ENCODE measurements at regions of chr9 and their contacts with region 1.

Region 1: DNA sequence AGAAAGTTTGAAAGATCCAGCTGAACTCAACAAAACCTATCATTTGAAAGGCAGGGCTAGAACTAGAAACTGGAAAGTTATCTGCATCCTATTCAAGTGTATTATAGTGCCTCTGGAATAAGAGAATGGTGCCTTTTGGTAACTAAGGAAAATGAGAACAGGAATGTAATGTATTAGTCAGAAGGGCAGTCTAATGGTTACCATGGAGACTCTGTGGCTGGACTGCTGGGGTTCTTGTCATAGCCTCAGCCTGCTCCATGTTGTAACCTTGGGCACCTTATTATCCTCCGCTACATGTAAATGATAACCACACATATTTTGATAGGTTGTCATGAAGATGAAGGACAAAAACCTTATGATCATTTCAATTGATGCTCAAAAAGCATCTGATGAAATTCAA is 24.6 kb upstream of the IFNB1 start:
- DNase-seq: no peak
- H3K4me3 ChIP-seq: no peak overlapping the region
- H3K27ac ChIP-seq: no peak overlapping the region
- H3K4me1 ChIP-seq: no peaks in the 10 kb centered on the region
- H3K27me3 ChIP-seq: no peaks in the 10 kb centered on the region
- CTCF ChIP-seq: no peak
- EP300 ChIP-seq: no peak
- POLR2A ChIP-seq: no peak

Region 2: DNA sequence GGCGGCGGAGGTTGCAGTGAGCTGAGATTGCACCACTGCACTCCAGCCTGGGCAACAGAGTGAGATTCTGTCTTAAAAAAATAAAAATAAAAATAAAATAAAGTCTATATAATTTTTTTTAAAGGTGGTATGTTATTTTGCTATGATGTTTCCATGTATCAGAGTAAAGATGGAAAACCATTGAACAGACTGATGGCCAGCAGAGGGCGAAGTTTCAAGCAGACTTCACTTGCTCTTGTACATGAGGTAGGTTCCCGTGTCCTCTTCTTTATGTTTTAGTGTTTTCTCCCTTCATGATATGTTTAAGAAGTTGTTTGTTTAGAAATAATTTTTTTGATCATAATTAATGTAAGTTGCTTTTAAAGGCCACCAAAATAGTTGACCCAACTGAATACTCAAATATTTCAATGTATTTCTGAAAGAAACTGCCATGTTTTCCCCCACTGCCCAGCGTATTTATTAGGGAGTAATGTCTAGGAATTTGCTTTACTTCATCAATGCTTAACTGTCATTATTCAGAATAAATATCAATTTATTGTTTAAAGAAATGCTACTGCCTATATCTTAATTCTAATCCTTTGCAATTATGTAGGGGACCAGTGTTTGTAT is 217.2 kb before region 1 on chr9:
- intact Hi-C with region 1: loop called in 1 of 4 experiments (anchors 10 kb)
- DNase-seq: peak; percentile 32 to 65 (median 59)
- H3K4me3 ChIP-seq: no peak overlapping the region
- H3K27ac ChIP-seq: no peak overlapping the region
- H3K4me1 ChIP-seq: no peaks in the 10 kb centered on the region
- H3K27me3 ChIP-seq: no peaks in the 10 kb centered on the region
- CTCF ChIP-seq: peak in 2 of 3 donors; percentile 20 to 24
- EP300 ChIP-seq: no peak
- POLR2A ChIP-seq: no peak

Region 3: GRCh38 chr9:21060919-21061561 is 41.3 kb before region 1 on chr9:
- intact Hi-C with region 1: no loop called
- DNase-seq: no peak
- H3K4me3 ChIP-seq: no peak overlapping the region
- H3K27ac ChIP-seq: no peak overlapping the region
- H3K4me1 ChIP-seq: no peaks in the 10 kb centered on the region
- H3K27me3 ChIP-seq: no peaks in the 10 kb centered on the region
- CTCF ChIP-seq: no peak
- EP300 ChIP-seq: no peak
- POLR2A ChIP-seq: no peak

Region 4: DNA sequence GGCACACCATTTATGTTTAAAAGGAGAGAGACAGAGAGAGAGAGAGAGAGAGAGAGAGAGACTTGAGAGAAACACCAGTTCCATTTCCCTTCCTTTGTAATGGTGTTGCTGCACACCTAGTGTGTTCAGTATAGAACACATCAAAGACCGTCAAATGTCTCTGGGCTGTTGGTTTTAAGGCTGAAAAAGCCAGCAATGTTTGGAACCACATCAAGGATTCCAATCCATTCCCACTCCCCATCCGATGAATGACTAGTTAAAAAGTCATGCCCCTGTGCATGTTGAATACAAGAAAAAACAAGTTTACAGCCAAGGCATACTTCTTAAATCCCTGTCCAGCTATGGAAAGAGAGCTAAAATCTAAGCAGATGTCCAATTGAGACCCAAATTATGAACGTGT is 462.9 kb after region 1 on chr9:
- intact Hi-C with region 1: no loop called
- DNase-seq: no peak
- H3K4me3 ChIP-seq: no peak overlapping the region
- H3K27ac ChIP-seq: no peak overlapping the region
- H3K4me1 ChIP-seq: no peaks in the 10 kb centered on the region
- H3K27me3 ChIP-seq: peaks cover 7% of the 10 kb centered on the region
- CTCF ChIP-seq: no peak
- EP300 ChIP-seq: no peak
- POLR2A ChIP-seq: no peak

Measured in ovary (tissue), 10 donors.